Activated naive CD4-positive, alpha-beta T cell treated with anti-CD3 and anti-CD28 coated beads for 36 hours (primary cell): ENCODE measurements at regions of chr3 and their contacts with region 1.

Region 1: DNA sequence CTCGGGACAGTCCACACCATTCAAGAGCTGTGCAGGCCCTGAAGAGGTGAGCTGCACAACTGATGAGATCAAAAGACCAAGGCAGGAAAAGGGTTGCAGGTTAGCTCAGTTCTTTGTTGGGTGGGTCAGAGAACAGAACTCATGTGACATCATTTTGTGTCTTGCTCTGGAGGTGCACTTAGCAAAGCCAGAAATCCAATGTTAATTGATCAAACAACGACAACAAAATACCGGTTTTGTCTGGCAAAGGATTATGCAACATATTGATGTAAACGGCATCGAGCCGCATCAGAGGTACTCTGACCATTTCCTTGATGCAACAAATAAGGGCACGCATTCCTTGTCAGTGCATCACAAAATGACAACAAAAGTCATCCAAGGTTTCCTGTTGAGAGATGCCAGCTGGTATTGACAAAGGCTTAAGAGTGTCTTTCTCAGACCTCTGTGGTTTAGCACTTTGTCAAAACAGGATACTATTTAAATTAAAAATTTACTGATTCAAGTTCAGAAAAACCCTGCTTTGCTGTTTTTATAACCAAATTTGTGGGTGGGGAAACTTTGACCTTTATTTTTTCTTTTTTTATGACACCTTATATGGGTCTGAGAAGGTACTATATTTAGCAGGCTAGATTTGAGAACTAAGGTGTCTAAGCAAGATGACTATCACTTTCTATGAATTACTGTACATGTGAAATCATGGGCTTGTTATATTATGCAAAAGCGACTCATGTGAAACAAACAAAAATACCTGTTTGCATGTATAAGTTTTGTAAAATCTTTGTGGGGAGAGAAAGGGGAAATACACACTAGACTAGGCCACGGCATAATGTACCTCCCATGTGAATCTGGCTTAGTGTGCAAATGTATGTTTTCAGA is 496.1 kb downstream of the FOXP1 start:
- DNase-seq: peak; percentile 69
- H3K4me3 Mint-ChIP-seq: peak overlapping the region; percentile 14
- H3K27ac Mint-ChIP-seq: peak overlapping the region; percentile 88
- H3K4me1 Mint-ChIP-seq: peaks cover 89% of the 10 kb centered on the region
- H3K27me3 Mint-ChIP-seq: no peaks in the 10 kb centered on the region

Region 2: GRCh38 chr3:70771426-70772147 is 315.8 kb before region 1 on chr3:
- CTCF ChIA-PET with region 1: no interaction called
- intact Hi-C with region 1: loop called (anchors 1 kb)
- DNase-seq: no peak
- H3K4me3 Mint-ChIP-seq: no peak overlapping the region
- H3K27ac Mint-ChIP-seq: no peak overlapping the region
- H3K4me1 Mint-ChIP-seq: peaks cover 14% of the 10 kb centered on the region
- H3K27me3 Mint-ChIP-seq: peaks cover 25% of the 10 kb centered on the region

Region 3: DNA sequence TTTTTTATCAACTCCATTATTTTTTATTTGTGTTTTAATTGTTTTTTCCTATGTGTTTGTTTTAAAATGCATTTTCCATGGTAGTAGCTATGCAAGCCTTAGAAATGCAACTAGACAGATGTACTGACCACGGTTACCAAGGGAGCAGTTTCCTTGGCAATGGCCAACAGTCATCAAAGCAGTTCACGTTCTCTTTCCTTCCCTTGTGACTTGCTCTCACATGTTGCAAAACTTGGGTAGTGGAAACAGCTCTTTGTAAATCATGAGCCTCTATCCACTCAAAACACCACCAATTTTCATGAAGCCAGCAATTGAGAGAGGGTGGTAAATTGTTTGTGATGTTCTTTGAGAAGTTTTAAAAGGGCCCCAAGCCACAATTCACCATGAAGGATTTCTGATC is 275.5 kb before region 1 on chr3:
- CTCF ChIA-PET with region 1: no interaction called
- intact Hi-C with region 1: no loop called
- DNase-seq: peak; percentile 16
- H3K4me3 Mint-ChIP-seq: no peak overlapping the region
- H3K27ac Mint-ChIP-seq: no peak overlapping the region
- H3K4me1 Mint-ChIP-seq: no peaks in the 10 kb centered on the region
- H3K27me3 Mint-ChIP-seq: peaks cover 4% of the 10 kb centered on the region

Region 4: GRCh38 chr3:71057526-71057894 is 29.9 kb before region 1 on chr3:
- CTCF ChIA-PET with region 1: interaction called, 3 read pairs
- intact Hi-C with region 1: loop called (anchors 1 kb)
- DNase-seq: peak; percentile 49
- H3K4me3 Mint-ChIP-seq: peak overlapping the region; percentile 53
- H3K27ac Mint-ChIP-seq: no peak overlapping the region
- H3K4me1 Mint-ChIP-seq: peaks cover 87% of the 10 kb centered on the region
- H3K27me3 Mint-ChIP-seq: no peaks in the 10 kb centered on the region

Region 5: DNA sequence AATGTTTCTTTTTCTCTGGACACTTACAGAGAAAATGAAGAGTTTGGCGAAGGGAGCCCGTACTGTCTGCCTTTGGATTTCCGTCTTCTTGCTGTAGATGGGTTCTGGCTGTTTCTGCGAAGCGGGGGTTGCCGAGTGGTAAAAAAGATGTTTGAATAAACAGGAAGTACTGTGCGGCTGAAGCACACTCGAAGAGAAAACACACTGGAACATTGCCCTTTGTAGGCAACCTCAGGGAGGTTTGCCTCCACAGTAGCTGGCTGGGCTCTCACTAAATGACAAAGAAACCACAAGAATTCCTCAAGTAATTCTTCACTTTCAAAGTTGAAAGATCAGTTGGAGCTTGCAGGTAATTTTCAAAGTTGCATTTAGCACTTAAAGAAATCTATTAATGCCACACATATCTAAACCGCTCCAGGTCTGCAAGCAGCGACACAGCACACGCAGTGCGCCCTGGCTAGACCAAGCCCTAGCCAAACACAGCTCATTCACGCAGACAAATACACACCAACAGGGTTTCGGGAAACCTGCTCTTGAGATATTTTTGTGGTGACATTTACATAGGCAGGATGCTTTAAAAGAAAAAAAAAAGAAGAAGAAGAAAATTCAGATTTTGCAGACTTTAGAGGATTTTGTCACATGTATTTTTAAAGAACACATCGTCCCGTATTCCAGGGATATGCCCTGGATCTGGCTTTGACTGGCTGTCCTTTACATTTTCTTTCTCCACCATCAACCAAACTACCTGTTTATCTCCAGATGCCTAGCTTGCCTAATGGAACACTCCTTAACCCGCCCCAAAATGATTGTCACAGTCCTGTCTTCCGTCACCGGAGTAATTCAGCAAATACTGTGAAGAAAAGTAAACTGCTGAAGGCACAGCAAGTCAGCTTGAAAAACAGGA is 43.3 kb after region 1 on chr3:
- CTCF ChIA-PET with region 1: interaction called, 5 read pairs
- intact Hi-C with region 1: loop called (anchors 1 kb)
- DNase-seq: peak; percentile 82
- H3K4me3 Mint-ChIP-seq: peak overlapping the region; percentile 88
- H3K27ac Mint-ChIP-seq: peak overlapping the region; percentile 96
- H3K4me1 Mint-ChIP-seq: peaks cover 66% of the 10 kb centered on the region
- H3K27me3 Mint-ChIP-seq: no peaks in the 10 kb centered on the region

Region 6: GRCh38 chr3:71226565-71227269 is 139.3 kb after region 1 on chr3:
- CTCF ChIA-PET with region 1: interaction called, 3 read pairs
- intact Hi-C with region 1: loop called (anchors 1 kb)
- DNase-seq: peak; percentile 95
- H3K4me3 Mint-ChIP-seq: peak overlapping the region; percentile 77
- H3K27ac Mint-ChIP-seq: peak overlapping the region; percentile 94
- H3K4me1 Mint-ChIP-seq: peaks cover 83% of the 10 kb centered on the region
- H3K27me3 Mint-ChIP-seq: no peaks in the 10 kb centered on the region

Region 7: GRCh38 chr3:71423151-71423906 is 335.9 kb after region 1 on chr3:
- CTCF ChIA-PET with region 1: no interaction called
- intact Hi-C with region 1: loop called (anchors 1 kb)
- DNase-seq: no peak
- H3K4me3 Mint-ChIP-seq: no peak overlapping the region
- H3K27ac Mint-ChIP-seq: peak overlapping the region; percentile 30
- H3K4me1 Mint-ChIP-seq: peaks cover 84% of the 10 kb centered on the region
- H3K27me3 Mint-ChIP-seq: no peaks in the 10 kb centered on the region